Activated CD4-positive, alpha-beta T cell treated with anti-CD3 and anti-CD28 coated beads for 36 hours (primary cell): ENCODE measurements at regions of chr5 and their contacts with region 1.

Region 1: GRCh38 chr5:80985600-80986228 is 25.6 kb downstream of the RASGRF2 start:
- DNase-seq: no peak
- ATAC-seq: no peak
- H3K4me3 Mint-ChIP-seq: no peak overlapping the region
- H3K27ac Mint-ChIP-seq: peak overlapping the region; percentile 69
- H3K4me1 Mint-ChIP-seq: peaks cover 51% of the 10 kb centered on the region
- H3K27me3 Mint-ChIP-seq: no peaks in the 10 kb centered on the region

Region 2: DNA sequence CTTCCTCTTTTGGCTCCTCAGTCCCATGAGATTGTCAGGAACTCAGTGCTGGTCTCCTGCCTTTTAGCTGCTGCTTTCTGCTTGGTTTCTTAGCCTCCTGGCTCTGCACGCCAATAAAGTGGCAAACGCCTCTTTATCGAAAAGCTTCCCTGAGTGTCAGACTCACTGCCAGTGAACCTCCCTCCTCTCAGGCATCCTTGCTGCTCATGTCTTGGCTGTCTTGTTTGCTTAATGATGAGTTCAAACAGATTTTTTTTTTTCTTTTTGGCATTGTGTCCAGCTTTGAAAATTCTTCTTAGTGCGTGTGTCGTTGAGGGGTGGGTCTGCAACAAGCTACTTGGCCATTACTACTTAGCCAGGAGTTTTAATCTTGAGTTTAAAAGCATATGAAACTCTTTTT is 10.6 kb before region 1 on chr5:
- CTCF ChIA-PET with region 1: interaction called, 13 read pairs
- POLR2A ChIA-PET with region 1: no interaction called
- intact Hi-C with region 1: no loop called
- DNase-seq: no peak
- ATAC-seq: no peak
- H3K4me3 Mint-ChIP-seq: no peak overlapping the region
- H3K27ac Mint-ChIP-seq: no peak overlapping the region
- H3K4me1 Mint-ChIP-seq: peaks cover 72% of the 10 kb centered on the region
- H3K27me3 Mint-ChIP-seq: no peaks in the 10 kb centered on the region